Endothelial cell of umbilical vein (primary cell): ENCODE measurements at regions of chr16 and their contacts with region 1.

Region 1: DNA sequence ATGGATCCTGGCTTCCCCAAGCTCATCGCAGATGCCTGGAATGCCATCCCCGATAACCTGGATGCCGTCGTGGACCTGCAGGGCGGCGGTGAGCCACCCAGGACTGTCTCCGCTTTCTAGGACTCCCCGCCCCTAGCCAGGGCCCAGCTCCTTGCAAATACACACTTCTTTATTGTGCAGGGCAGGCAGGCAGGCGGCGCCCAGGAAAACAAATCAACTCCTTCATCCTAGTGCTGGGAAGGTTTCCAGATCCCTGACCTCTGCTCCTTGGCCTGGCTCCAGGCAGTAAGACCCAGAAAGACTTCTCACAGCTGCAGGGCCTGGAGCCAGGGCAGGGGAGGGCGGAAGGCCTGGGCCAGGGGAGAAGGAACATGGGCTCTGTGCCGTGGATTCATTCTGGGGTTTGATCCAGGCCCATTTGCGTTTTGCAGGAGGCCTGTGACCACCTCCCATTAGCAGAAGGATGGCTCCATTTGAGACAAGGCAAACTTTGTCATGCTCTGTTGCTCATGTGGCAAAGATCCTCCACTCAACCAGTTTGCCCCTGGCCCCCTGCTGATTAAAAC is 6.0 kb upstream of the LPCAT2 start:
- DNase-seq: peak; percentile 76
- H3K4me3 ChIP-seq: no peak overlapping the region
- H3K27ac ChIP-seq: peak overlapping the region; percentile 95
- H3K4me1 ChIP-seq: peaks cover 58% of the 10 kb centered on the region
- H3K27me3 ChIP-seq: no peaks in the 10 kb centered on the region
- CTCF ChIP-seq: no peak
- POLR2A ChIP-seq: peak; percentile 37

Region 2: DNA sequence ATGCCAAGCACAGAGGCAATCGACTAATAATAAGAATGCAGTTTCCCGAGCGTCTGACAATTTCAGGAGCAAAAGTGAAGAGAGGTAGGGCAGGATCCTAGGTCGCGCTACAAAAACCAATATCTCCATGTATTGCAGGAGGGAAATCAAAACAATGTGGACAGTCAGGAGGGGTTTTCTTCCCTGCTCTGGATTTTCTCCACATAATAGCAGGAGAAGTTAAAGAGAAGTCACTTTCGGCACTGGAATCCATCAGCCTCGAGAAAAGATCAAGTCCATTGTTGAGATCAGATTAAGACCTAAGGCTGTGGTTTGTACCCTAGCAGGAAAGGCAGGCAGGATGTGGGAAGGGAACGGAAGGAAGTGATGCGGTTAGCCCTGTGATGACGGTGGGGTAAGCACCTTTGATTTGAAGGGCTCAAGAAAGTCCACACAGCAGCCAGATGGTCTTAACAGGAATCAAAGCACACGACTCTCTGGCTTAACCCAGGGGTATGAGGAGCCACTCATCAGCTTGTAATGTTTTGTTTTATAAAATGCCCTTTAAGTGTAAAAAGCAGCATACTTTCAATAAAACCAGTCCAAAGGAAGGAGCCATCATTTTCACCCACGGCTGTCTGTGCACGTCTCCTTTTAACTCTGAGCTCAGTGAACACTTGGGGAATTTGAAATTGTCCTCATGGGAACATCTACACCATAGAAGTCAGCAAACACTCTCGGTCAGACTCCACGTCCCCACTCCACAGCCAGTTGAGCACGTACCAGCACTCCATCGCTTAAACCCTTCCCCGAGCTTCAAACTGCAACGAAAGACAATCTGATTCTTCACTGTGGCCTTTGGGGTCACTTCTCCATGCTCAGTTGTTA is 1984.1 kb before region 1 on chr16:
- CTCF ChIA-PET with region 1: no interaction called
- POLR2A ChIA-PET with region 1: no interaction called
- dilution Hi-C with region 1: no loop called
- intact Hi-C with region 1: loop called (anchors 5 kb)
- DNase-seq: peak; percentile 92
- H3K4me3 ChIP-seq: peak overlapping the region in 1 of 3 experiments; percentile 51
- H3K27ac ChIP-seq: peak overlapping the region; percentile 97
- H3K4me1 ChIP-seq: peaks cover 39% of the 10 kb centered on the region
- H3K27me3 ChIP-seq: no peaks in the 10 kb centered on the region
- CTCF ChIP-seq: no peak
- POLR2A ChIP-seq: peak; percentile 73

Region 3: GRCh38 chr16:55480228-55480661 is 22.6 kb before region 1 on chr16:
- CTCF ChIA-PET with region 1: interaction called, 3 read pairs
- POLR2A ChIA-PET with region 1: interaction called, 4 read pairs
- dilution Hi-C with region 1: no loop called
- intact Hi-C with region 1: loop called (anchors 1 kb)
- DNase-seq: peak; percentile 79
- H3K4me3 ChIP-seq: peak overlapping the region; percentile 78 to 99 (median 97)
- H3K27ac ChIP-seq: peak overlapping the region; percentile 90
- H3K4me1 ChIP-seq: peaks cover 21% of the 10 kb centered on the region
- H3K27me3 ChIP-seq: no peaks in the 10 kb centered on the region
- CTCF ChIP-seq: no peak
- POLR2A ChIP-seq: peak; percentile 54

Region 4: GRCh38 chr16:55488306-55488705 is 14.6 kb before region 1 on chr16:
- CTCF ChIA-PET with region 1: interaction called, 7 read pairs
- POLR2A ChIA-PET with region 1: interaction called, 3 read pairs
- dilution Hi-C with region 1: no loop called
- intact Hi-C with region 1: loop called (anchors 1 kb)
- DNase-seq: peak; percentile 81
- H3K4me3 ChIP-seq: no peak overlapping the region
- H3K27ac ChIP-seq: peak overlapping the region; percentile 63
- H3K4me1 ChIP-seq: peaks cover 25% of the 10 kb centered on the region
- H3K27me3 ChIP-seq: no peaks in the 10 kb centered on the region
- CTCF ChIP-seq: no peak
- POLR2A ChIP-seq: peak; percentile 16

Region 5: DNA sequence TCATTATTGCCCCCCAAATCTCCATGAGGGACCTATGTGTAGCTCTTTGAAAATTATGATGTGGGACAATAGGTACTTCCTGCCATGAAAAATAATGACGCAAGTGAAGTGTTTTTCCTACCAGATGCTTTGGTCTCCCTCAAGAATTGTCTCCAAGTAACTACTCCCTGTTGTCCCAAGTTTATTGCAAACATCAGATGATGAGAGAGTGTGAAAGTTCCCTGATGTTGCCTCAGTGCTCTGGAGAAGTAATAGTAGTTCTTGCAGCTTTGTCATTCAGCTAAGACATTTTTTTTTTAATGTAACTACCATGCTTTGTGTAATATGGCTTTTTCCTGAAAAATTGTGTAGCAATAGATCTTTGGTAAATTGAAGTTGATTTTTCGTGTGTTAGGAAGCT is 26.1 kb after region 1 on chr16:
- CTCF ChIA-PET with region 1: interaction called, 16 read pairs
- POLR2A ChIA-PET with region 1: no interaction called
- dilution Hi-C with region 1: no loop called
- intact Hi-C with region 1: loop called (anchors 1 kb)
- DNase-seq: peak; percentile 62
- H3K4me3 ChIP-seq: no peak overlapping the region
- H3K27ac ChIP-seq: peak overlapping the region; percentile 63
- H3K4me1 ChIP-seq: peaks cover 38% of the 10 kb centered on the region
- H3K27me3 ChIP-seq: no peaks in the 10 kb centered on the region
- CTCF ChIP-seq: no peak
- POLR2A ChIP-seq: no peak

Region 6: GRCh38 chr16:55543472-55543871 is 40.6 kb after region 1 on chr16:
- CTCF ChIA-PET with region 1: interaction called, 10 read pairs
- POLR2A ChIA-PET with region 1: no interaction called
- dilution Hi-C with region 1: no loop called
- intact Hi-C with region 1: no loop called
- DNase-seq: peak; percentile 47
- H3K4me3 ChIP-seq: no peak overlapping the region
- H3K27ac ChIP-seq: no peak overlapping the region
- H3K4me1 ChIP-seq: peaks cover 19% of the 10 kb centered on the region
- H3K27me3 ChIP-seq: no peaks in the 10 kb centered on the region
- CTCF ChIP-seq: no peak
- POLR2A ChIP-seq: no peak

Region 7: GRCh38 chr16:55559233-55559632 is 56.3 kb after region 1 on chr16:
- CTCF ChIA-PET with region 1: no interaction called
- POLR2A ChIA-PET with region 1: no interaction called
- dilution Hi-C with region 1: no loop called
- intact Hi-C with region 1: loop called (anchors 2 kb)
- DNase-seq: peak; percentile 91
- H3K4me3 ChIP-seq: peak overlapping the region in 1 of 3 experiments; percentile 42
- H3K27ac ChIP-seq: peak overlapping the region; percentile 68
- H3K4me1 ChIP-seq: peaks cover 69% of the 10 kb centered on the region
- H3K27me3 ChIP-seq: no peaks in the 10 kb centered on the region
- CTCF ChIP-seq: no peak
- POLR2A ChIP-seq: no peak